A549 (cell line): ENCODE measurements at regions of chr2 and their contacts with region 1.

Region 1: DNA sequence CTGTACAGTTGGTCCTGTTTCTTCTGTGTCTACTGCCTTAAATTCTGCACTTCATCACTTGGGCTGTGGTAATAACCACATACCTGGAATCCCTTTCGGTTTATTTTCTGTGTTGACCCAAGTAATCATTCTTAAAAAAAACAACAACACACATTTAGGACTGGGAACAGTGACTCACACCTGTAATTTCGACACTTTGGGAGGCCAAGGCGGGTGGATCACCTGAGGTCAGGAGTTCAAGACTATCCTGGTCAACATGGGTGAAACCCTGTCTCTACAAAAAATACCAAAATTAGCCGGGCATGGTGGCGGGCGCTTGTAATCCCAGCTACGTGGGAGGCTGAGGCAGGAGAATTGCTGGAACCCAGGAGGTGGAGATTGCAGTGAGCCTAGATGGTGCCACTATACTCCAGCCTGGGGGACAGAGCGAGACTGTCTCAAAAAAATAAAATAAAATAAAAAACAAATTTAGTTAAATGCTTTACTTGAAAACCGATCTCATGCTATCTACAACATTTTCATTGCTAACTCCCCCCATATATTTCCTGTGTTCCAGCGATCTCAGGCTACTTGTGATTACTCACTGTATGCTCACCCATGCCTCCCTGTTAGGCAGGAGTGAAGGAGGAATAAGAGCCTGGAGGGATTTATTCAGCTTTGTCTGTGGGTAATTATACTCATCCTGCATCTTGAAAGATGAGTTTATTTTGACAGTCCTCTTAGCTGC is 18.2 kb downstream of the ACSL3 start:
- DNase-seq: peak; percentile 22 to 27
- ATAC-seq: peak; percentile 55 to 72; a peak in 4 of 6 replicates
- H3K4me3 ChIP-seq: no peak overlapping the region
- H3K27ac ChIP-seq: peak overlapping the region in 1 of 2 experiments; percentile 42; a peak in 3 of 6 replicates
- H3K4me1 ChIP-seq: peaks cover 51% of the 10 kb centered on the region
- CTCF ChIP-seq: no peak
- EP300 ChIP-seq: no peak
- POLR2A ChIP-seq: no peak
- RAD21 ChIP-seq: no peak

Region 2: GRCh38 chr2:222903234-222904220 is 24.5 kb after region 1 on chr2:
- CTCF ChIA-PET with region 1: interaction called, 14 read pairs
- POLR2A ChIA-PET with region 1: no interaction called
- DNase-seq: peak; percentile 52 to 72
- ATAC-seq: peak; percentile 69 to 83
- H3K4me3 ChIP-seq: no peak overlapping the region
- H3K27ac ChIP-seq: peak overlapping the region; percentile 13 to 61; a peak in 4 of 6 replicates
- H3K4me1 ChIP-seq: peaks cover 63% of the 10 kb centered on the region
- CTCF ChIP-seq: peak; percentile 78
- EP300 ChIP-seq: no peak
- POLR2A ChIP-seq: no peak
- RAD21 ChIP-seq: peak; percentile 82 to 86